Activated CD4-positive, alpha-beta memory T cell treated with anti-CD3 and anti-CD28 coated beads for 36 hours (primary cell): ENCODE measurements at regions of chr12 and their contacts with region 1.

Region 1: DNA sequence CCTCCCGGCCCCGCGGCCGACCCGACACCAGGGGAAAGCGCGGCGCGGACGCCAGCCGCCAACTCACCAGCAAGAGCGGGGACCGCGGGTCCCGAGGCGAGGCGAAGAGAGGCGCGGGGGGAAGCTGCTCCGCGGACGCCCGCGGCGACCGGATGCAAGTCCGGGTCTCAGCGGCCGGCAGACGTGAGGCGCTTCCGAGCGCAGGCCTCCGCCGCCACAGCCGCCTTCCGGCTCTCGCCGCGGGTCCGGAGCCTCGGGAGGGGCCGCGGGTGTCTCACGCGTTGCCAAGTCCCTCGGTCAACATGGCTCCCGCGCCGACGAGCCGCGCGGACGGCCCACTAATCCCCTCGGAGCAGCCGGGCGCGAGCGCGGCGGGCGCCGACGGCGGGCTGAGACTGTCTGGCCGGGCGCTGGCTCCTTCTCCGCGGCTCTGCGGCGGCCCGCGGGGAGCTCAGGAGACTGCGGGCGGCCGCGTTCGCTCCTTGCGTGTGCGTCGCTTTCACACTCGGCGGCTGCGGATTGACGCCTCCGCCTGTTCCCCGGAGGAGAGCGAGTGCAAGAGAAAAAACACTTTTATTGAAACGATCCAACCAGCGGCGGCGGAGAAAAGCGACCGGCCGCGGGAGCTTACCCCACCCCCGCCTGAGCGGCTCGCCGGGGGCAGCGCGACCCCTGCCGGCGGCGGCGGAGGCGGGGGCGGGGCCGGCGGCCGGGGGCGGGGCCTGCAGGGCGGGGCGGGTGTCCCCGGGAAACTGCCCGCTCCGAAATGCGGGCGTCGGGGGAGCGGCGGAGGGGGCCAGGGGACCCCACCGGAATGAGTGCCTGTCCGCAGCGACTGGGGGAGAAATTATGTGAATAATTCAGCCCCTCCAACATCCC is at the start of gene CDK17:
- DNase-seq: peak; percentile 92
- H3K4me3 Mint-ChIP-seq: peak within 1 kb of the TSS; percentile 86
- H3K27ac Mint-ChIP-seq: peak within 1 kb of the TSS; percentile 97
- H3K4me1 Mint-ChIP-seq: peaks cover 39% of the 10 kb centered on the region
- H3K27me3 Mint-ChIP-seq: no peaks in the 10 kb centered on the region
- total RNA-seq, gene CDK17: 34.5 to 35.7 TPM

Region 2: DNA sequence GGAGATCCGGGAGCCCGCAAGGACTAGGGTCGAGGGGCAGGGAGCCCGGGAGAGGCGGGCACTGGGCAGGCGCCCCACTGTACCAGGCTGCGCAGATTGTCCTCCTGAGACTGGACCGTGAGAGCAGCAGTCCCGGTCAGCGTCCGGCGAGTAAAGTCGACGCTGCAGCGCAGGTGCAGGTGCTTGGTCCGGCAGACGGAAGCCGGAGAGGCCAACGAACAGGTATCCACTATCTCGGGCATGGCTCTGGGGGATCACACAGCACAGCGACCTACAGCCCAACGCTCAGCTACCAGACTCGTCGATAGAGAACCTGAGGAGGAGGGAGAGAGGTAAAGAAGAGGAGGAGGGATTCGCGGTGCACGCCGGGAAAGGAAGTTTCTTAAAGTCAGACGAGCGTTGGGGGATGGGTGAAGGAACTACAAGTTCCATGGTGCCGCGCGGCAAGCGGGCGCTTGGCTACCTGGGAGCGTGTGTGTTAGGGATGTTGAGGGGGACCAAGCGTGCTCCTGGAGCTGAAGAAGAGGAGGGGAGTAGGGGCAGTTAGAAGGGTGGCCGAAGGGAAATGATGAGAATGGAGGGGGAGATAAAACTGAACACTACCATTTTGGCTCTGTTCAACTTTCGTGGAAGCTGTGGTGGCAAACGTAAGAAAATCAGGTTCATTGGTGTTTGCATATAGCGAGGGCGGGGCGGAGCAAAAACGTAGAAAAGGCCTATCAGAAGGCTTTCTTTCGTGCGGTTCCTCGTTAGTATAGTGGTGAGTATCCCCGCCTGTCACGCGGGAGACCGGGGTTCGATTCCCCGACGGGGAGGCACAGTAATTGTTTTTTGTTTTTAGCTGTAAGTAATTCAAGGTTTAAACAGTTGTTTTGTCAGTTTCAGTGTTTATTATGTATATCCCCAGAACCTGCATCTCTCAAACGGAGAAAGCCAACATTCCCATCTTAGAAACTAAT is 364.6 kb before region 1 on chr12 and contains the start of gene LTA4H:
- CTCF ChIA-PET with region 1: interaction called, 3 read pairs
- POLR2A ChIA-PET with region 1: interaction called, 3 read pairs
- intact Hi-C with region 1: loop called (anchors 1 kb)
- DNase-seq: peak; percentile 97
- H3K4me3 Mint-ChIP-seq: no peak within 1 kb of the TSS
- H3K27ac Mint-ChIP-seq: no peak within 1 kb of the TSS
- H3K4me1 Mint-ChIP-seq: peaks cover 13% of the 10 kb centered on the region
- H3K27me3 Mint-ChIP-seq: no peaks in the 10 kb centered on the region
- total RNA-seq, gene LTA4H: 106 to 110 TPM

Region 3: GRCh38 chr12:96103067-96103644 is 297.0 kb before region 1 on chr12:
- CTCF ChIA-PET with region 1: no interaction called
- POLR2A ChIA-PET with region 1: no interaction called
- intact Hi-C with region 1: no loop called
- DNase-seq: no peak
- H3K4me3 Mint-ChIP-seq: no peak overlapping the region
- H3K27ac Mint-ChIP-seq: no peak overlapping the region
- H3K4me1 Mint-ChIP-seq: peaks cover 12% of the 10 kb centered on the region
- H3K27me3 Mint-ChIP-seq: no peaks in the 10 kb centered on the region

Region 4: DNA sequence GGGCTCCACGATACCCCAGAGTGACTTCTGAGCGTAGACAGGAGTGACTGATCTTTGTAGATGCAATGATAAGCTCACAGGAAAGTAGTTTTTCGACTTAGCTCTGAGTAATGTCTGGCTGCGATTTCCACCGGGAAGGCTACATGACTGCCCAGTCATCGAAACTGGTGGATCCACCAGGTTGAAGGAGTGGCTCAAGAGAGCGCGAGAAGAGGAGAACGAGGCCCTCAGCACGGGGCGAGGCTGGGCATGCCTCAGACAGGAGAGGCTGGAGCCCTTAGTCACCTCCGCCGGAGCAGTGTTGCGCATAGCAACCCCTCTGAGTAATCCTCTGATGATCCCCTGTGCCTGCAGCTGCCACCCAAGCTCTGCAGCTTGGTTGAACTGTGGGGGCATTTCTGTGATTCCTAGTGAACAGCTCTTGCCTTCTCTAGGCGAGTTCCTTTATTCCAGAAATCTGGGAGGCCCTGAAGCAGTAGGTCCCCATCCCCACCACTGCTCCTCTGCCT is 180.4 kb before region 1 on chr12:
- CTCF ChIA-PET with region 1: interaction called, 28 read pairs
- POLR2A ChIA-PET with region 1: interaction called, 4 read pairs
- intact Hi-C with region 1: loop called (anchors 1 kb)
- DNase-seq: peak; percentile 36
- H3K4me3 Mint-ChIP-seq: no peak overlapping the region
- H3K27ac Mint-ChIP-seq: peak overlapping the region; percentile 14
- H3K4me1 Mint-ChIP-seq: peaks cover 53% of the 10 kb centered on the region
- H3K27me3 Mint-ChIP-seq: no peaks in the 10 kb centered on the region

Region 5: DNA sequence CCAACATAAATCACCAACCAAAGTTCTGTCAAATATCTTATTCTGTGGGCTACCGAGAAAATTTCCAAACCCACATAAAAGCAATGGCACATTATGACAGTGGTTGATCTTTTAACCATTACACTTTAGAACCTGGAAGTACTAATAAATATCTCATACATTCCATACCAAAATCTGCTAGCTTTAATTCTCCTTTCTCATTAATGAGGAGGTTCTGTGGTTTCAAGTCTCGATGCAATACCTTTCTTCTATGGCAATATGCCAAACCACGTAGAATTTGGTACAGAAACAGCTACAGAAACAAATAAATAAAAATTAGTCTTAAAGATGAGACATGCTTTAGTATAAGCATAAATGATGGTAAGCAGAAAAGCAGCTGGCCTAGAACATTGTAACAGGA is 105.3 kb before region 1 on chr12:
- CTCF ChIA-PET with region 1: no interaction called
- POLR2A ChIA-PET with region 1: interaction called, 4 read pairs
- intact Hi-C with region 1: loop called (anchors 10 kb)
- DNase-seq: no peak
- H3K4me3 Mint-ChIP-seq: no peak overlapping the region
- H3K27ac Mint-ChIP-seq: no peak overlapping the region
- H3K4me1 Mint-ChIP-seq: peaks cover 22% of the 10 kb centered on the region
- H3K27me3 Mint-ChIP-seq: no peaks in the 10 kb centered on the region

Region 6: GRCh38 chr12:96427269-96427729 is 27.1 kb after region 1 on chr12:
- CTCF ChIA-PET with region 1: interaction called, 3 read pairs
- POLR2A ChIA-PET with region 1: interaction called, 3 read pairs
- intact Hi-C with region 1: loop called (anchors 1 kb)
- DNase-seq: peak; percentile 76
- H3K4me3 Mint-ChIP-seq: peak overlapping the region; percentile 17
- H3K27ac Mint-ChIP-seq: peak overlapping the region; percentile 79
- H3K4me1 Mint-ChIP-seq: peaks cover 47% of the 10 kb centered on the region
- H3K27me3 Mint-ChIP-seq: no peaks in the 10 kb centered on the region

Region 7: DNA sequence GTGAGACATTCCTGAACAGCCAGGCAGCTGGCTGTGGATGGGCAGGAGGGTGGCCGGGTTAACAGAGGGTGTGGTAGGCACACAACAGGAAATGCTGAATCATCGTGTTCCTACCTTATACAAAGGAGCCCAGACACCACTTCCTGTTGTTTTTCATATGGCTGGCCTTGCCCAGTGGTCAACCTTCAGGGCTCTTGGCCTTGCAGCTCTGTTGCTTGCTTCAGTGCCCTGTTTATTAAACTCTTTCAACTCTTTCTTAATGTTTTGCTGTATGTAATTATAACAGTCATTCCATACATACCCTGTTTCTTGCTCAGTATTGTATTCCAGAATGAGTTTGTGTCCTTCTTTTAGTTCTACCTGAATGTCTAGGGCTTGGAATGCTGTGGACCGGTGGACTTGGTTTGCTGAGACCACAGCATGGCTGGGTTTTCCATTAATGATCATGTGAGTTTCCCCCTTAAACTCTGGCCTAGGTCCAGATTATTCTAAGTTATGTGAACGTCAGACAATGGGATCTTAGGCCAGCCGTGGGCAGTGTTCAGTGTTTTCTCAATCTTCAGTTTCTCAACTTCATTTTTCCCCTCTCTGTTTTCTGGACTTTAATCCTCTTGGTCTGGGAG is 101.1 kb after region 1 on chr12:
- CTCF ChIA-PET with region 1: interaction called, 4 read pairs
- POLR2A ChIA-PET with region 1: interaction called, 3 read pairs
- intact Hi-C with region 1: loop called (anchors 5 kb)
- DNase-seq: peak; percentile 56
- H3K4me3 Mint-ChIP-seq: no peak overlapping the region
- H3K27ac Mint-ChIP-seq: peak overlapping the region; percentile 84
- H3K4me1 Mint-ChIP-seq: peaks cover 39% of the 10 kb centered on the region
- H3K27me3 Mint-ChIP-seq: no peaks in the 10 kb centered on the region

Region 8: GRCh38 chr12:96529912-96530311 is 129.8 kb after region 1 on chr12:
- CTCF ChIA-PET with region 1: no interaction called
- POLR2A ChIA-PET with region 1: no interaction called
- intact Hi-C with region 1: no loop called
- DNase-seq: no peak
- H3K4me3 Mint-ChIP-seq: no peak overlapping the region
- H3K27ac Mint-ChIP-seq: no peak overlapping the region
- H3K4me1 Mint-ChIP-seq: peaks cover 6% of the 10 kb centered on the region
- H3K27me3 Mint-ChIP-seq: no peaks in the 10 kb centered on the region

Region 9: GRCh38 chr12:96774496-96775256 is 374.5 kb after region 1 on chr12:
- CTCF ChIA-PET with region 1: no interaction called
- POLR2A ChIA-PET with region 1: no interaction called
- intact Hi-C with region 1: no loop called
- DNase-seq: no peak
- H3K4me3 Mint-ChIP-seq: no peak overlapping the region
- H3K27ac Mint-ChIP-seq: no peak overlapping the region
- H3K4me1 Mint-ChIP-seq: no peaks in the 10 kb centered on the region
- H3K27me3 Mint-ChIP-seq: peaks cover 2% of the 10 kb centered on the region